Sigmoid colon (tissue), 7 donors: ENCODE measurements at regions of chr1 and their contacts with region 1.

Region 1: GRCh38 chr1:234918181-234918841 is 210.3 kb downstream of the TOMM20 start:
- DNase-seq: peak; percentile 63
- H3K4me3 ChIP-seq: no peak overlapping the region
- H3K27ac ChIP-seq: peak overlapping the region; percentile 73 to 84 (median 76)
- H3K4me1 ChIP-seq: peaks cover 0 to 52% (median 36%) of the 10 kb centered on the region in 4 donors
- H3K27me3 ChIP-seq: no peaks in the 10 kb centered on the region
- CTCF ChIP-seq: no peak
- EP300 ChIP-seq: peak in 2 of 4 donors; percentile 6 to 73
- POLR2A ChIP-seq: no peak

Region 2: GRCh38 chr1:234823191-234824176 is 94.8 kb before region 1 on chr1:
- intact Hi-C with region 1: loop called (anchors 10 kb)
- DNase-seq: no peak
- H3K4me3 ChIP-seq: no peak overlapping the region
- H3K27ac ChIP-seq: no peak overlapping the region
- H3K4me1 ChIP-seq: peaks cover 0 to 9% (median 0%) of the 10 kb centered on the region in 4 donors
- H3K27me3 ChIP-seq: no peaks in the 10 kb centered on the region
- CTCF ChIP-seq: no peak
- EP300 ChIP-seq: no peak
- POLR2A ChIP-seq: no peak

Region 3: DNA sequence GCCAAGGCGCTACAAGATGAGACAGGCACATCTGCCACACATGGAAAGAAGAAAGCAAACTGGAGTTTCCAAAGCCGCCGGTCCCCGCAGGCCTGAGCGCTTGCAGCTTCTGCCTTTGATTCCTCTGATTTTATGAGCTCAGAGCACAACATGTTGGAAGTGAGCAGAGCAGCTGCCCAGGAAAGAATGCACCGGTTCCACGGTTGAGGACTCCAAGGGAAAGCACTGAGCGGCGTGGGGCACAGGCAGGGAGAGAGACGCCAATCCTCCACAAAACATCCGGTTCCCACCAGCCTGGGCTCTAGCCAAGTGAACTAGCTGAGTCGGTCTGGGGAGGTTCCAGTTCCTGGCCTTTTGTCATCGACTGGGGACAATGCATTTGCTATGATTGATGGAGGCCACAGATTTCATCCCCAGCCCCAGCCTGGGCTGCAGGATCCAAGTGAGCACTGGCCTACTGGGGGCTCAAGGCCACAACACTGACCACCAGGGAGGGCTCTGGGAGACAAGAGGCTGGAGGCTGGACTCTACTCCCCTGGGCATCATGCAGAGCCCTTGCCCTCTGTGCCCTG is 55.3 kb before region 1 on chr1:
- intact Hi-C with region 1: loop called (anchors 2 kb)
- DNase-seq: peak; percentile 92
- H3K4me3 ChIP-seq: no peak overlapping the region
- H3K27ac ChIP-seq: peak overlapping the region; percentile 66 to 83 (median 80)
- H3K4me1 ChIP-seq: peaks cover 0 to 42% (median 32%) of the 10 kb centered on the region in 4 donors
- H3K27me3 ChIP-seq: no peaks in the 10 kb centered on the region
- CTCF ChIP-seq: no peak
- EP300 ChIP-seq: peak in 1 of 4 donors; percentile 16
- POLR2A ChIP-seq: no peak

Region 4: GRCh38 chr1:234970731-234971476 is 52.6 kb after region 1 on chr1:
- intact Hi-C with region 1: loop called (anchors 5 kb)
- DNase-seq: peak; percentile 95
- H3K4me3 ChIP-seq: peak overlapping the region in 2 of 4 donors; percentile 43 to 44
- H3K27ac ChIP-seq: peak overlapping the region; percentile 75 to 90 (median 81)
- H3K4me1 ChIP-seq: peaks cover 0 to 65% (median 61%) of the 10 kb centered on the region in 4 donors
- H3K27me3 ChIP-seq: no peaks in the 10 kb centered on the region
- CTCF ChIP-seq: no peak
- EP300 ChIP-seq: peak in 1 of 4 donors; percentile 0
- POLR2A ChIP-seq: peak in 1 of 2 donors; percentile 18

Region 5: DNA sequence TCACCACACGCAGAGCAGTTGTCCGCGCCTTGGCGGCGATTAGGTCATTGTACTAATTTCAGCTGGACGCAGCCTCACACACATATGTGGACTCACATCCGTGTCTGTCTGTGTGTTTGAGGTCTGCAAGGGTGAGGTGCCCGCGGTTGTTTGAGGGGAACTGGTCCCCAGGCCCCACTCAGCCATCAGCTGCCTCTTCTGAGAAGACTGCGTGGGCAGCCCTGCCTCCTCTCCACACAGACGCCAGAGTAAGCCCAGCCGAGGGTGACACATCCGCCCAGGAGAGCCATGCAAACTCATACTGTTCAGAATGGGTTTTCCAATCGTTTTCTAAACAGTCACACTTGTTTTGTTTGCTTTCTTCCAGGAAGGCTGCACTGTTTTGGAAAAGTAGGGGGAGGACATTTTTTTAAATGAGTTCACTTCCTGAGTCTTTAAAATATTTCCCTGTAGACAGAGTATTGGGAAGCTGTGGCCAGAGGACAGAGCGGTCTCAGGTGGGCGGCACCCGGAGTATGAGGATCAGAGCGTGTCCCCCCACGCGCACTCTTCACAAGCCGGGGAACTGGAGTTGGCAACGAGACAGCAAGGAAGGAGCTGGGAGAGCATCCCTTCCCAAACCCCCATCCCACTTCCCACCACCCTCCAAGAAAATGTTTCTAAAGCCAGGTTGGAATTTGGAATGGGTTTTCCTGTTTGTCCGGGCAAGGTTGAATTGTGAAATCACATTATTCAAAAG is 157.0 kb after region 1 on chr1:
- intact Hi-C with region 1: loop called (anchors 5 kb)
- DNase-seq: peak; percentile 81
- H3K4me3 ChIP-seq: no peak overlapping the region
- H3K27ac ChIP-seq: peak overlapping the region; percentile 69 to 89 (median 82)
- H3K4me1 ChIP-seq: peaks cover 0 to 39% (median 35%) of the 10 kb centered on the region in 4 donors
- H3K27me3 ChIP-seq: no peaks in the 10 kb centered on the region
- CTCF ChIP-seq: no peak
- EP300 ChIP-seq: peak in 2 of 4 donors; percentile 39 to 40
- POLR2A ChIP-seq: no peak